H1 (cell line): ENCODE measurements at regions of chr20 and their contacts with region 1.

Region 1: GRCh38 chr20:50070991-50071888 is 41.7 kb downstream of the UBE2V1 start:
- DNase-seq: peak; percentile 43 to 100
- H3K4me3 ChIP-seq: peak overlapping the region in 2 of 4 experiments; percentile 23 to 43; a peak in 5 of 8 replicates
- H3K27ac ChIP-seq: no peak overlapping the region
- H3K4me1 ChIP-seq: peaks cover 0 to 2% (median under 1%) of the 10 kb centered on the region in 4 experiments; a peak in 3 of 7 replicates
- H3K27me3 ChIP-seq: no peaks in the 10 kb centered on the region
- CTCF ChIP-seq: peak; percentile 97 to 98 (median 97)
- EP300 ChIP-seq: no peak
- POLR2A ChIP-seq: no peak
- RAD21 ChIP-seq: peak; percentile 99 to 100

Region 2: GRCh38 chr20:49999329-49999728 is 71.9 kb before region 1 on chr20:
- CTCF ChIA-PET with region 1: interaction called, 12 read pairs
- POLR2A ChIA-PET with region 1: no interaction called
- DNase-seq: no peak
- H3K4me3 ChIP-seq: no peak overlapping the region
- H3K27ac ChIP-seq: no peak overlapping the region
- H3K4me1 ChIP-seq: no peaks in the 10 kb centered on the region
- H3K27me3 ChIP-seq: no peaks in the 10 kb centered on the region
- CTCF ChIP-seq: no peak
- EP300 ChIP-seq: no peak
- POLR2A ChIP-seq: no peak
- RAD21 ChIP-seq: no peak

Region 3: DNA sequence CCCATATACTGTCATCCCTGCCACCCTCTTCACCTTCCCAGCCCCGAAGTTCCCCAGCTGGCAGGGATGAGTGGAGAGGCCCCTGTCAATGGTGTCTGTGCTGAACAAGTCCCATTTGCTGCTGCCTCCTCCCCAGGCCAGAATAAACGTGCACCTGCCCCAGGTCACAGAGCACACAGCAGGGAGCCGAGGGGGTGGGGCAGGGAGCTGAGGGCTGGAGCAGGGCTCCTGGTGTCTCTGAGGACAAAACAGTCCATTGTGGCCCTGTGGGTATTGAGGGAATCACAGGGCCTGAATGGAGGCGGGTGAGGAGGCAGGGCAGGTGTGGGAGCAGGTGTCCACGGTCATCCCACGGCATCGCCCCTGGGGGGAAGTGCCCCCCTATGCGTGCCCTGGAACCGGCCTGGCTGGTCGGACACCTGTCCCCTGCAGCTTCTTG is 32.6 kb before region 1 on chr20:
- CTCF ChIA-PET with region 1: interaction called, 13 read pairs
- POLR2A ChIA-PET with region 1: interaction called, 5 read pairs
- DNase-seq: no peak
- H3K4me3 ChIP-seq: no peak overlapping the region
- H3K27ac ChIP-seq: no peak overlapping the region
- H3K4me1 ChIP-seq: peaks cover 0 to 14% (median 5%) of the 10 kb centered on the region in 4 experiments; a peak in 4 of 7 replicates
- H3K27me3 ChIP-seq: no peaks in the 10 kb centered on the region
- CTCF ChIP-seq: no peak
- EP300 ChIP-seq: no peak
- POLR2A ChIP-seq: no peak
- RAD21 ChIP-seq: no peak

Region 4: GRCh38 chr20:50054626-50055511 is 16.4 kb before region 1 on chr20:
- CTCF ChIA-PET with region 1: interaction called, 45 read pairs
- POLR2A ChIA-PET with region 1: interaction called, 11 read pairs
- DNase-seq: no peak
- H3K4me3 ChIP-seq: no peak overlapping the region
- H3K27ac ChIP-seq: no peak overlapping the region
- H3K4me1 ChIP-seq: peaks cover 0 to 5% (median 2%) of the 10 kb centered on the region in 4 experiments; a peak in 3 of 7 replicates
- H3K27me3 ChIP-seq: peaks cover 0 to 2% (median 0%) of the 10 kb centered on the region in 4 experiments; a peak in 1 of 7 replicates
- CTCF ChIP-seq: no peak
- EP300 ChIP-seq: no peak
- POLR2A ChIP-seq: no peak
- RAD21 ChIP-seq: no peak

Region 5: DNA sequence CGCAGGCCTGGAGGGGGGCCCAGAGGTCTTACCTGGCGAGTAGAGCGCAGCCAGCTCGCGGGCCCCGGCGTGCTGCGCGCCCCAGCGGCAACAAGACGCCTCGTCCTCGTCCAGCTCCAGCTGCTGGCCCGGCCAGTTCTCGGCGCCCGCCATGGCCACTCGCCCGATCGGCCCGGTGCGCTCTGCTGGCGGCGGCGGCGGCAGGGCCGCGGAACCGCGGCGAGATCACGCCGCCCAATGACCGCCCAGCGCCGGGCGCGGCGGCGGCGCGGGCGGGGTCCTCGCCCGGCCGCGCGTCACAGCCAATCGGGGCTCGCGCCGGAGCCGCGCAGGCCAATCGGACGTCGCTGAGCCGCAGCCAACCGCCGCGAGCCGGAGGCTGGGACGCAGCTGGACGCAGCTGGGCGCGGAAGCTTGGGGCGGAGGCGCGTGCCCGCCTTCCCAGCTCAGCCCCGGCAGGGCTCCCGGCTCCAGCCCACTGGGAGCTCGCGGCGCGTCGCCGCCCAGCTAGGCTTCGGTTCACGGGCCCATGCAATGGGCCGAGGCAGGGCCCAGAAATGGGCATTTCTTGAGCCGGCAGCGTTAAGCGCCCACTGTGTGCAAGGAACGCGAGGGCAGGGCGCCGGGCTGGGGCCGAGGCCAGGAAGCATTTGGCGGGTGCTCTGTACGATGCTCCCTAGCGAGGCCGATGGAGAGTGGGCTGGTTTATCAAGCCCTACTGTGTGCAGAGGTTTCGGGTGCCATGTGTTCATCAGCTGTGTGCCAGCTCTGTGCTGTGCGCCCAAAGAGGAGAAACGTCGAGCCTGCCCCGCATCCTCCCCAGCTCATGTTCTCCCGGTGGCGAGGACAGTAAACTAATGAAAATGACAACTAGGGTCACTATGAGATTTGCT is 82.5 kb after region 1 on chr20 and contains the start of gene PEDS1:
- CTCF ChIA-PET with region 1: interaction called, 12 read pairs
- POLR2A ChIA-PET with region 1: interaction called, 5 read pairs
- DNase-seq: peak in 1 of 2 experiments; percentile 87
- H3K4me3 ChIP-seq: peak within 1 kb of the TSS; percentile 61 to 98 (median 86)
- H3K27ac ChIP-seq: peak within 1 kb of the TSS; percentile 26; the same call in 1 of the 2 replicates
- H3K4me1 ChIP-seq: peaks cover 9 to 27% (median 16%) of the 10 kb centered on the region in 4 experiments
- H3K27me3 ChIP-seq: peaks cover 0 to 3% (median under 1%) of the 10 kb centered on the region in 4 experiments; a peak in 2 of 7 replicates
- CTCF ChIP-seq: no peak
- EP300 ChIP-seq: no peak
- POLR2A ChIP-seq: peak; percentile 70 to 75
- RAD21 ChIP-seq: no peak
- total RNA-seq, gene PEDS1: 28.9 and 33.3 TPM in 2 replicates